Activated B cell treated with CpG ODN at 0.5 μM for 24 hours (primary cell): ENCODE measurements at regions of chr15 and their contacts with region 1.

Region 1: DNA sequence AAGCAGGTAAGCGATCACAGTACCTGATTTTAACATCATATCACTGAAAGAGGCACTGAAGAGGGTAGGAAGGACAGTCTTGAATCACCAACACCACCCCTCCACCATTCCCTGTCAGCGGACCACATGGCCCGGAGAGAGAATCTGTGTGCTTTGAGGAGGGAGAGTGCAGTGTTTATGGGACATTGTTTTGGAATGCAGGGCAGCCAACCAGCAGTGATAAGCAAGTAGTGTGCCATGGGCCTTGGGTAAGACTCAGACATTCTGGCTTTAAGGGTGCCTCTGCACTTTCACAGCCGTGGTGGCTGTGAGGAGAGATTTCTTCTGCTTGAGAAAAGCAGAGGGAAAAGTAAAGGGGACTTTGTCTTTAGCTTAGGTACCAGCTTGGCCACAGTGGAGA is 46.4 kb downstream of the FAM81A start:
- DNase-seq: no peak
- ATAC-seq: no peak
- H3K4me3 Mint-ChIP-seq: no peak overlapping the region
- H3K27ac Mint-ChIP-seq: no peak overlapping the region
- H3K4me1 Mint-ChIP-seq: peaks cover 12% of the 10 kb centered on the region
- H3K27me3 Mint-ChIP-seq: no peaks in the 10 kb centered on the region
- CTCF ChIP-seq: no peak

Region 2: DNA sequence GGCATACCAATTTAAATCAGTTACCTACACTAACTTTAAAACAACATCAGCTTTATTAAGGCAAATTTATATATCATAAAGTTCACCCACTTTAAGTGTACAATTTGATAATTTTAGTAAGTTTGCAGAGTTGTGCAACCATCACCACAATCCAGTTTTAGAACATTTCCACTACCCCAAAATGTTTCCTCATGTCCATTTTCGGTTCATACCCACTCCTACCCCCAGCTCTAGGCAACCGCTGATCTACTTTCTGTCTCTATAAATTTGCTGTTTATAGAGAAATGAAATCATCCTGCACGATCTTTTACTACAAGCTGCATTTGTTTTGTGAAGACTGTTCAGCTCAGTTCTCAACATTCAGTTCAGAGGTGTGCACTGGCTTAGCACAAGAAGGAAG is 78.0 kb before region 1 on chr15:
- CTCF ChIA-PET with region 1: no interaction called
- POLR2A ChIA-PET with region 1: no interaction called
- intact Hi-C with region 1: no loop called
- DNase-seq: no peak
- ATAC-seq: peak; percentile 32
- H3K4me3 Mint-ChIP-seq: peak overlapping the region; percentile 68
- H3K27ac Mint-ChIP-seq: peak overlapping the region; percentile 79
- H3K4me1 Mint-ChIP-seq: peaks cover 79% of the 10 kb centered on the region
- H3K27me3 Mint-ChIP-seq: no peaks in the 10 kb centered on the region
- CTCF ChIP-seq: no peak

Region 3: DNA sequence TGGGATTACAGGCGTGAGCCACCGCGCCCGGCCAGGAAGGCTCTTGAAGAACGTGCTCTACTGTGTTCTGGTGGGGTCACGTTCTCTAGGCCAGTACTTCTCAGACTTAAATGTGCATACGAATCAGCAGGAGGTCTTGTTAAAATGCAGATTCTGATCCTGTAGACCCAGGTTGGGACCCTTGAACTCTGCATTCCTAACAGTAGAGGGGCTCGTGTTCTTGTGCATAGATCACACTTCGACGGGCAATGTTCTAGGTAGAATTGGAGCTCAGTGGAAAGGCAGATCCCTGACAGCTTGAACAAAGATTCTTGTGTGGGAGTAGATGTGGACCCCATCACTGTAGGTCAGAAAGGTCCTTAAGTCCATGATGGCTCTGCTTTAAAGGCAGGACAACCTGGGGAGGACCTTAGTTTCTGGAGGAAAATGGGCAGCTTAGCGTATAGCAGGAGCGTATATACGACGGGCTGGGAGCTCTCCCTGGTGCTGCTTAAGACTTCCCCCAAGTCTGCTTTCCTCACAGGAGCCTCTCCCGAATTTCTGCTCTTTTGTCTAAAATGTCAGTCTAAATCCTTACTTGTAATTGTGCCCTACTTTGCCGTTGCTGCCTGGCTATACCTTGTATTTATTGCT is 63.3 kb before region 1 on chr15:
- CTCF ChIA-PET with region 1: no interaction called
- POLR2A ChIA-PET with region 1: no interaction called
- intact Hi-C with region 1: loop called (anchors 2 kb)
- DNase-seq: no peak
- ATAC-seq: no peak
- H3K4me3 Mint-ChIP-seq: no peak overlapping the region
- H3K27ac Mint-ChIP-seq: no peak overlapping the region
- H3K4me1 Mint-ChIP-seq: peaks cover 57% of the 10 kb centered on the region
- H3K27me3 Mint-ChIP-seq: no peaks in the 10 kb centered on the region
- CTCF ChIP-seq: no peak

Region 4: GRCh38 chr15:59437817-59438562 is 46.4 kb before region 1 on chr15 and contains the start of gene FAM81A:
- CTCF ChIA-PET with region 1: no interaction called
- POLR2A ChIA-PET with region 1: interaction called, 8 read pairs
- intact Hi-C with region 1: loop called (anchors 2 kb)
- DNase-seq: peak; percentile 65
- ATAC-seq: peak; percentile 82
- H3K4me3 Mint-ChIP-seq: peak within 1 kb of the TSS; percentile 88
- H3K27ac Mint-ChIP-seq: peak within 1 kb of the TSS; percentile 65
- H3K4me1 Mint-ChIP-seq: peaks cover 42% of the 10 kb centered on the region
- H3K27me3 Mint-ChIP-seq: peaks cover 3% of the 10 kb centered on the region
- CTCF ChIP-seq: no peak
- total RNA-seq, gene FAM81A: 4.8 and 6.2 TPM in 2 replicates

Region 5: GRCh38 chr15:59501597-59501996 is 17.2 kb after region 1 on chr15:
- CTCF ChIA-PET with region 1: no interaction called
- POLR2A ChIA-PET with region 1: no interaction called
- intact Hi-C with region 1: loop called (anchors 1 kb)
- DNase-seq: no peak
- ATAC-seq: peak; percentile 67
- H3K4me3 Mint-ChIP-seq: no peak overlapping the region
- H3K27ac Mint-ChIP-seq: no peak overlapping the region
- H3K4me1 Mint-ChIP-seq: no peaks in the 10 kb centered on the region
- H3K27me3 Mint-ChIP-seq: no peaks in the 10 kb centered on the region
- CTCF ChIP-seq: peak; percentile 24

Region 6: GRCh38 chr15:61335998-61336638 is 1851.7 kb after region 1 on chr15:
- CTCF ChIA-PET with region 1: no interaction called
- POLR2A ChIA-PET with region 1: no interaction called
- intact Hi-C with region 1: no loop called
- DNase-seq: no peak
- ATAC-seq: no peak
- H3K4me3 Mint-ChIP-seq: no peak overlapping the region
- H3K27ac Mint-ChIP-seq: no peak overlapping the region
- H3K4me1 Mint-ChIP-seq: no peaks in the 10 kb centered on the region
- H3K27me3 Mint-ChIP-seq: no peaks in the 10 kb centered on the region
- CTCF ChIP-seq: no peak